Activated CD4-positive, alpha-beta T cell treated with anti-CD3 and anti-CD28 coated beads for 36 hours (primary cell): ENCODE measurements at regions of chr2 and their contacts with region 1.

Region 1: GRCh38 chr2:234288974-234289455 is 207.9 kb downstream of the ARL4C start:
- DNase-seq: peak; percentile 87
- ATAC-seq: peak; percentile 2
- H3K4me3 Mint-ChIP-seq: peak overlapping the region; percentile 54
- H3K27ac Mint-ChIP-seq: peak overlapping the region; percentile 98
- H3K4me1 Mint-ChIP-seq: peaks cover 74% of the 10 kb centered on the region
- H3K27me3 Mint-ChIP-seq: no peaks in the 10 kb centered on the region

Region 2: GRCh38 chr2:233404222-233404621 is 884.8 kb before region 1 on chr2:
- CTCF ChIA-PET with region 1: no interaction called
- POLR2A ChIA-PET with region 1: no interaction called
- intact Hi-C with region 1: no loop called
- DNase-seq: peak; percentile 80
- ATAC-seq: peak; percentile 49
- H3K4me3 Mint-ChIP-seq: no peak overlapping the region
- H3K27ac Mint-ChIP-seq: peak overlapping the region; percentile 24
- H3K4me1 Mint-ChIP-seq: peaks cover 56% of the 10 kb centered on the region
- H3K27me3 Mint-ChIP-seq: no peaks in the 10 kb centered on the region

Region 3: GRCh38 chr2:233418761-233419625 is 870.0 kb before region 1 on chr2:
- CTCF ChIA-PET with region 1: no interaction called
- POLR2A ChIA-PET with region 1: no interaction called
- intact Hi-C with region 1: loop called in 1 of 2 experiments (anchors 10 kb)
- DNase-seq: peak; percentile 72
- ATAC-seq: peak; percentile 52
- H3K4me3 Mint-ChIP-seq: peak overlapping the region; percentile 63
- H3K27ac Mint-ChIP-seq: peak overlapping the region; percentile 81
- H3K4me1 Mint-ChIP-seq: peaks cover 97% of the 10 kb centered on the region
- H3K27me3 Mint-ChIP-seq: no peaks in the 10 kb centered on the region

Region 4: GRCh38 chr2:234051374-234052070 is 237.5 kb before region 1 on chr2:
- CTCF ChIA-PET with region 1: no interaction called
- POLR2A ChIA-PET with region 1: no interaction called
- intact Hi-C with region 1: no loop called
- DNase-seq: no peak
- ATAC-seq: no peak
- H3K4me3 Mint-ChIP-seq: no peak overlapping the region
- H3K27ac Mint-ChIP-seq: no peak overlapping the region
- H3K4me1 Mint-ChIP-seq: peaks cover 5% of the 10 kb centered on the region
- H3K27me3 Mint-ChIP-seq: no peaks in the 10 kb centered on the region

Region 5: DNA sequence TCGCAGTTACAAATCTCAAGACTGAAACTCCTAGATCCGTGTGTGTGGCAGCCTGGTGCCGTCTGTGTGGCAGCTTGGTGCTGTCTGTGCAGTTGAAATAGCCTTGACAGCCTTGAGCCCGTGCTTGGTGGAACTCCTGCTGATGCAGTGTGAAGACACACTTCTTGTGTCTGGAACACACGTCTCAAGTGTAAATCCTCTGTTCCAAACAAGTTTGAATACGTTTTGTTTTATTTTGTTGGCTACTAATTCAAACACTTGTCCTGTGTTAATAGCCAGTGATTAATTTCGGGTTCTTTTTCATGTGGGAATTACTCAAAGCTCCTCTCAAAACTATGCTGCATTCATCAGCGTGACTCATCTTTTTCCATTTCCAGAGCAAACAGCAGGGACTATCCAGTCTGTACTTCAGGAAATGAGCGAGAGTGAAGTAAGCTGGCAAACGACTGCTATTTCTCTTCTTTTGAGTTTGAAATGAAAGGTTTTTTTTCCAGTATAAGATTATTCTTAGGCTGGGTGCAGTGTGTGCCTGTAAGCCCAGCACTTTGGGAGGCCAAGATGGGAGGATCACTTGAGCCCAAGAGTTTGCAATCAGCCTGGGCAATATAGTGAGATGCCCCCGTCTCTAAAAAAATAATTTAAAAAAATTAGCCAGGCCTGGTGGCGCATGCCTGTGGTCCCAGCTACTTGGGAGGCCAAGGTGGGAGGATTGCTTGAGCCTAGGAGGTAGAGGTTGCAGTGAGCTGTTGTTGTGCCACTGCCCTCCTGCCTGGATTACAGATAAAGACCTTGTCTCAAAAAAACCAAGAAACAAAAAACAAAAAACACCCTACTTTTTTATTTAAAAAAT is 85.7 kb before region 1 on chr2:
- CTCF ChIA-PET with region 1: no interaction called
- POLR2A ChIA-PET with region 1: no interaction called
- intact Hi-C with region 1: no loop called
- DNase-seq: peak; percentile 35
- ATAC-seq: peak; percentile 73
- H3K4me3 Mint-ChIP-seq: no peak overlapping the region
- H3K27ac Mint-ChIP-seq: peak overlapping the region; percentile 2
- H3K4me1 Mint-ChIP-seq: peaks cover 7% of the 10 kb centered on the region
- H3K27me3 Mint-ChIP-seq: no peaks in the 10 kb centered on the region

Region 6: GRCh38 chr2:234269769-234270204 is 19.2 kb before region 1 on chr2:
- CTCF ChIA-PET with region 1: interaction called, 8 read pairs
- POLR2A ChIA-PET with region 1: no interaction called
- intact Hi-C with region 1: loop called in 1 of 2 experiments (anchors 2 kb)
- DNase-seq: no peak
- ATAC-seq: no peak
- H3K4me3 Mint-ChIP-seq: no peak overlapping the region
- H3K27ac Mint-ChIP-seq: peak overlapping the region; percentile 21
- H3K4me1 Mint-ChIP-seq: peaks cover 49% of the 10 kb centered on the region
- H3K27me3 Mint-ChIP-seq: no peaks in the 10 kb centered on the region

Region 7: GRCh38 chr2:234308813-234309195 is 19.8 kb after region 1 on chr2:
- CTCF ChIA-PET with region 1: interaction called, 16 read pairs
- POLR2A ChIA-PET with region 1: interaction called, 15 read pairs
- intact Hi-C with region 1: loop called (anchors 1 kb)
- DNase-seq: peak; percentile 86
- ATAC-seq: peak; percentile 86
- H3K4me3 Mint-ChIP-seq: peak overlapping the region; percentile 42
- H3K27ac Mint-ChIP-seq: peak overlapping the region; percentile 99
- H3K4me1 Mint-ChIP-seq: peaks cover 66% of the 10 kb centered on the region
- H3K27me3 Mint-ChIP-seq: no peaks in the 10 kb centered on the region

Region 8: DNA sequence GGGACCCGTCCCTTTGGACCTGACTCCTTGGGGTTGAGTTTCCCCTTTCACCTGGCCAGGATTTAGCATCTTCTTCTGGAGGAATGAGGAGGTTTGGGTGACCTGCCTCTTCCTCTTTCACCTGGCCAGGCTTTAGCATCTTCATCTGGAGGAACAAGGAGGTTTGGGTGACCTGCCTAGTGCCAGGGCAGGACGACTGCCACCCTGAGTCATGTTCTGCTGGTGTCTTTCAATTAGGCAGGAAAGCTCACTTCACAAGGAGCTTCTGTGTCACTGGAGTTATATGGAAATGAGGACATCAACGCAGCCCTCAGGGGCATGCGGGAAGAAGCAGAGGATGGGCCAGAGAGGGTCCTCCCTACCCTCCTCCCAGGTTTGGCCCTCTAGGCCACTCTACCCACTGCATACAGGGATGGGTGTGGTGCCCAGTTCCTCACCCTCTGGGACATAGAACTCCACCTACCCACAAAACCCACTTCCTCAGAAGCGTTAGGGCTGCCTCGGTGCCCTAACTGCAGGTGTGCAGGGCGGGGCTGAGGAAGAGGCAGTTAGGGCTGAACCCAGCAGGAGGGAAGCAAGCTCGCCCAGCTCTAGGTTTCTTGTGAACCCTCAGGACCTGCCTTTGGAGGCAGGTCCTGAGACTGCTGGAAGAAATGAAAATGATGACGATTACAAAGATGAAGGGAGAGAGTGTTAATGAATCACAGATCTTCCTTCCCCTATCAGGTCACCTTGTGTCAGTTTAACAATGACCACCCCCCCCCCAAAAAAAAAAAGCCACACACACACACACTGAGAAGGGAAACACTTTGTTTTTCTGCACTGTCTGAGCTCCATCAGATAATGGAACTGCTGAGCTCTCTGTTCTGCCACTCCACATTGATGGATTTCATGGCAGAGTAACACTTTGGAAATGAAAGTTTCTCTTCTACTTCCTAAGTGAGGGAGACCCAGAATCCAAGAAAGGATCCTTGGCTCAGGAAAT is 136.9 kb after region 1 on chr2:
- CTCF ChIA-PET with region 1: interaction called, 7 read pairs
- POLR2A ChIA-PET with region 1: interaction called, 4 read pairs
- intact Hi-C with region 1: loop called (anchors 1 to 2 kb)
- DNase-seq: peak; percentile 73
- ATAC-seq: peak; percentile 62
- H3K4me3 Mint-ChIP-seq: peak overlapping the region; percentile 60
- H3K27ac Mint-ChIP-seq: peak overlapping the region; percentile 97
- H3K4me1 Mint-ChIP-seq: peaks cover 90% of the 10 kb centered on the region
- H3K27me3 Mint-ChIP-seq: no peaks in the 10 kb centered on the region

Region 9: GRCh38 chr2:234478121-234478858 is 189.3 kb after region 1 on chr2:
- CTCF ChIA-PET with region 1: no interaction called
- POLR2A ChIA-PET with region 1: interaction called, 9 read pairs
- intact Hi-C with region 1: loop called in 1 of 2 experiments (anchors 1 kb)
- DNase-seq: peak; percentile 69
- ATAC-seq: peak; percentile 62
- H3K4me3 Mint-ChIP-seq: no peak overlapping the region
- H3K27ac Mint-ChIP-seq: peak overlapping the region; percentile 49
- H3K4me1 Mint-ChIP-seq: peaks cover 77% of the 10 kb centered on the region
- H3K27me3 Mint-ChIP-seq: no peaks in the 10 kb centered on the region

Region 10: DNA sequence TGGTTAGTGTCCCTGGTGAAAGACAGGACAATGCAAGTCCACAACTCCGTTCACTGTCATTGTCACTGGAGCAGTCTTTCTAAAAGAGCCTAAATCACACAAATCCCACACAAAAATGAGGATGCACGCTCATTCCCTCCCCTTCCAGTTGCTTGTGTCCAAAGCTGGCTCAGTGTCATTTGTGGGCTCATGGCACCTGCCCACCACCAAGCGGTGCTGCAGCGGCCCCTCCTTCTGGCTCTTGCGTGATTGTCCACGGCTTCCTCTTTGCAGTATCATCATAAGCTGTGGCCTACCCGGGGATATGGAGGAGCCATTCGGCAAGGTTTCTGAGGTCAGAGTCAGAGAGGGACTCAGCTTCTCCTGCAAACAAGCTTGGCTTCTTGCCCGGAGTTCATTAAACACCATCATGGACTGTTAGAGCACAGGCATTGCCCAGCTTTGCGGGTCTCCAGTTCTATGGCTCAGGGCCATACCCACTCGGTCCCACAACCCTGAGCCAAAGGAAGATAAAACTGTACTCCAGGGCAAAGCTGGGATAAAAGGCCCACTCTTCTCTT is 1025.4 kb after region 1 on chr2:
- CTCF ChIA-PET with region 1: no interaction called
- POLR2A ChIA-PET with region 1: no interaction called
- intact Hi-C with region 1: no loop called
- DNase-seq: no peak
- ATAC-seq: no peak
- H3K4me3 Mint-ChIP-seq: no peak overlapping the region
- H3K27ac Mint-ChIP-seq: no peak overlapping the region
- H3K4me1 Mint-ChIP-seq: no peaks in the 10 kb centered on the region
- H3K27me3 Mint-ChIP-seq: peaks cover 8% of the 10 kb centered on the region